A673 (cell line): ENCODE measurements at regions of chr2 and their contacts with region 1.

Region 1: DNA sequence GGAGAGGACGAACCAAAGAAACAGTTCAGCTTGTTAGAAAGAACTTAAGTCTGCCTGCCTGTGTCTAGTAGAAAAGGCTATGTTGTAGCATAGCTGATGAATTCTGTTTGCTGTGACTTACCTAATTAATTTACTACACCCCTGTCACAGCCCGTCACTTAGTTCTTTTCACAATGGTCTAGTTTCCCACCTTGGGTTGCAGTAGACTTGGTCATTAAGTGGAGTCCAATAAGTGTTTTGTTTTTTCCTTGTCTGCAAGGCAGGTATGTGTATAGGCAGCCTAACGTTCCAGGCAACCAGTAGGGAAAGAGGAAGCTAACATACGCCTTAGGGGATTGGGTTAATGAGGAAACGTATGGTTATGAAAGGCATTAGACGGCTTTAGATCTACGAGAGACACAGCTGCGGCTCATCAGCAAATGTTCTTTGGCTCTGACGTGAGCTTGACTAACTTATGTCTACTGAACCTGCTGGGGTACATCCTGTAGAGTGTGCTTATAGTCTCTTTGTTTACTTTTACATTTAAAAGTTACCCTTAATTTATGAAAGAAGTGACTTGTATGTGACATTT is 180.1 kb downstream of the PRPF40A start:
- DNase-seq: peak; percentile 93
- H3K4me3 ChIP-seq: peak overlapping the region; percentile 20
- H3K27ac ChIP-seq: peak overlapping the region; percentile 61
- H3K4me1 ChIP-seq: peaks cover 47% of the 10 kb centered on the region
- H3K27me3 ChIP-seq: no peaks in the 10 kb centered on the region
- CTCF ChIP-seq: no peak

Region 2: DNA sequence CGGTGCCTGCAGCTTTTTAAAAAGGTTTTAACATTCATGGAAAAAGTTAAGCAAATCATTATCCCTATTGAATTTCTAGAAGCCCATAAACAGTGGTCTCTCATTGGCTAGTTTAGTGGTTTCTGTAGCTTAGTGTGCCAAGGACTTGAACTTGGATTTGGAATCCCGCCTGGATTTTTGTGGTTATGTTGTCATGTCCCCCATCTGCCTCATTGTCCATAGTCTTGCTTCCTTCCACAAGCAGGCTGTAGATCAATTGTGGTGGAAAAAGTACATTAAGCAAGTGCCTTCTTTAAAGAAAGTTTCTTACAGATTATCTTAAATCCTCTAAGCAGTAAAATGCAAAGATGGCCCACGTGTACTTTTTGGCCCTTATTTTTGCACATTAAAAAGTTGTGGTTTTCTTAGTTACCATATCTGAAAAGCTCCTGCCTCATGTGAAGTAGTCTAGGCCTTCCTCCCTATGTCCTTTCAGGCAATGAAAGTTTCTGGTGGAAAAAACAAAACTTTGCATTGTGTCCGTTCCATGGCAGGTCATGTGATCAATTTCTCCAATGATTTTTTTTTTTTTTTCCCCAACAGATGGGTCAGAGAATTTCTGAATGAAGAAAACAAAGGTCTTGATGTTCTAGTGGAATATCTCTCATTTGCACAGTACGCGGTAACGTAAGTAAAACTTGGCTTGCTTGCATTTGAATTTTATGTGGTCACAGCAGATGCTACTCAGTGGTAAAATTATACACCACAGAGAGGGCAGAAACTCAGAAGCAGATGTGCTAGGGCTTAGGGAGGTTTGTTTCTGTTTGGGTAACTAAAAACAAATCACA is 21.2 kb after region 1 on chr2:
- CTCF ChIA-PET with region 1: no interaction called
- POLR2A ChIA-PET with region 1: no interaction called
- intact Hi-C with region 1: no loop called
- DNase-seq: no peak
- H3K4me3 ChIP-seq: no peak overlapping the region
- H3K27ac ChIP-seq: peak overlapping the region; percentile 20
- H3K4me1 ChIP-seq: peaks cover 21% of the 10 kb centered on the region
- H3K27me3 ChIP-seq: no peaks in the 10 kb centered on the region
- CTCF ChIP-seq: no peak

Region 3: DNA sequence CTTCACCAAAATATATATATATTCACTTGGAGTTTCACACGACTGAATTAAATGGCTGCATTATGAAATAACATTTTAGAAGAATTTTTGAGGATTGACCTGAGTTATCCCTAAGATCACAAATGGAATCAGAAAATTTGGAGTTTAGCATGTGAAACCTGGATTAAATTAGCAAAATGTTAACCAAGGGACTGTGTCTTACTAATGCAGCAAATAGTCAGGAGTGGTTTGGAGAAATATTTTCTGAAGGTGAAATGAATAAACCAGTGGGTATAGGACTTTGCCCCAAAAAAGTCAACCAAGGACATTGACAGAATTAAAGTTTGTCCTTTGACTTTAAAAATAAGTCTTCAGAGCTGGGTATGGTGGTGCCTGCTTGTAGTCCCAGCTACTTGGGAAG is 68.9 kb after region 1 on chr2:
- CTCF ChIA-PET with region 1: no interaction called
- POLR2A ChIA-PET with region 1: interaction called, 15 read pairs
- intact Hi-C with region 1: no loop called
- DNase-seq: no peak
- H3K4me3 ChIP-seq: no peak overlapping the region
- H3K27ac ChIP-seq: no peak overlapping the region
- H3K4me1 ChIP-seq: peaks cover 17% of the 10 kb centered on the region
- H3K27me3 ChIP-seq: no peaks in the 10 kb centered on the region
- CTCF ChIP-seq: no peak